ENCODE measurements at regions of chr2 and their contacts with region 1.

Region 1: DNA sequence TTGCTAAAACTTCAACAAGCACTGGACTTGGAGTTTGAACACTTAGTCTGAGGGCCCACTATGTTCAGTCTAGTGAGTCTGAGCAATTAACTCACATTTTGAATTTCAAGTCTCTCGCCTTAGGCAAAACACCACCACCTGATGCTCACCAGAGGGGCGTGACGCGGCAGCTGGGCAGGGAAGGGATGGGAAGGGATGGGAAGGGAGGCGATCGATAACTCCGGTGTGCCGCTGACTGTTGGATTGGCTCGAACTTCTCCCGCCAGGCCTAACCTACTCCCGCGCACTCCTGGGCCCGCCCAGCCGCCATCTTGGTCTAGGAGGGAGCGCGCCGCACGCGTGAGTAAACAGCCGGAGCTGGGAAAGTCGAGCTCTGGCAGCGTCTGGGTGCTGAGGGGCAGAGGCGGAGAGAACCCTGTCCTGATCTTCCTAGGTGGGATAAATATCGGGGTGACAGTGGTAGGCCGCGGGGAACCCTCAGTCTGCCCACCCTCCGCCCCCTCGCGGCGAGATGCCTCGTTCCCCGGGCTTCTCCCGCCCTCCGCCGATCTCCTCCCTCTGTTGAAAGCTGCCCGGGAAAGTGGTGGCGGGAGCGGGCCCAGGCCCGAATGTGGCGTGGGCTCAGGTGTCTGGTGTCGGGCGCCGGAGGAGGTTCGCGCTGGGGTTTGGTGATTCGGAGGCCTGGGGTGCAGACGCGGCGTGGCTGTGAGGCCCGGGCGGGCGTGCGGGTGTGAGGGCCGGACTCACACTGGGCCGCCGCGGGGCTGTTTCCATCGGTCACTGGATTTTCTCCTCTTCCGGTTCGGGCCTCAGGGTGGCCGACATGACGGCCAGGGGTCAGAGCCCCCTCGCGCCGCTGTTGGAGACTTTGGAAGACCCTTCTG is at the start of gene RIF1:
- H3K4me3 ChIP-seq: peak within 1 kb of the TSS; percentile 87
- H3K27ac ChIP-seq: peak within 1 kb of the TSS; percentile 89
- H3K4me1 ChIP-seq: no peaks in the 10 kb centered on the region
- CTCF ChIP-seq: peak; percentile 83

Region 2: DNA sequence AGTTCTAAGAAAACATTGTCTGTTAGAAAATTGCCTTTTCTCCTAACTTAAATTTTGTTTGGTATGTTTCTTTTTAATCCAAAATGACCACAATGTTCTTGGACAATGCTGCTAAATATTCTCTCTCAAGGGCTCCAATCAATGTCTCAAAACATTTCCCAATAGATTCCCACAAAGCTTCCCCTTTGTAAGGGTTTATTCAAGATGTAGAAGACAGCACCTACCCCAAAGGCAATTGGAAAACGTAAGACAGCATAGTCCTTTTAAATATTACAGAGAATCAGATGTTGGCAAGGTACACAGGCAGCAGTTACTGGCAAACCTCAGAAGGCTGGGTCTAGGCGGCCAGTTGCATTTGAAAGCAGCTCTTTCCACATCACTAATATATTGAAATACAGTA is 18.4 kb before region 1 on chr2:
- CTCF ChIA-PET with region 1: interaction called, 4 read pairs
- POLR2A ChIA-PET with region 1: interaction called, 11 read pairs
- H3K4me3 ChIP-seq: no peak overlapping the region
- H3K27ac ChIP-seq: no peak overlapping the region
- H3K4me1 ChIP-seq: no peaks in the 10 kb centered on the region
- CTCF ChIP-seq: no peak

Measured in HEK293 (cell line).